PC-9 (cell line): ENCODE measurements at regions of chr4 and their contacts with region 1.

Region 1: GRCh38 chr4:81040012-81040659 is 9.6 kb downstream of the BMP3 start:
- DNase-seq: no peak
- H3K4me3 ChIP-seq: no peak overlapping the region
- H3K27ac ChIP-seq: no peak overlapping the region
- H3K4me1 ChIP-seq: peaks cover 17% of the 10 kb centered on the region
- H3K27me3 ChIP-seq: no peaks in the 10 kb centered on the region
- CTCF ChIP-seq: peak; percentile 73

Region 2: GRCh38 chr4:80576796-80577195 is 463.3 kb before region 1 on chr4:
- CTCF ChIA-PET with region 1: interaction called, 19 read pairs
- POLR2A ChIA-PET with region 1: no interaction called
- intact Hi-C with region 1: no loop called
- DNase-seq: no peak
- H3K4me3 ChIP-seq: no peak overlapping the region
- H3K27ac ChIP-seq: no peak overlapping the region
- H3K4me1 ChIP-seq: no peaks in the 10 kb centered on the region
- H3K27me3 ChIP-seq: no peaks in the 10 kb centered on the region
- CTCF ChIP-seq: no peak

Region 3: DNA sequence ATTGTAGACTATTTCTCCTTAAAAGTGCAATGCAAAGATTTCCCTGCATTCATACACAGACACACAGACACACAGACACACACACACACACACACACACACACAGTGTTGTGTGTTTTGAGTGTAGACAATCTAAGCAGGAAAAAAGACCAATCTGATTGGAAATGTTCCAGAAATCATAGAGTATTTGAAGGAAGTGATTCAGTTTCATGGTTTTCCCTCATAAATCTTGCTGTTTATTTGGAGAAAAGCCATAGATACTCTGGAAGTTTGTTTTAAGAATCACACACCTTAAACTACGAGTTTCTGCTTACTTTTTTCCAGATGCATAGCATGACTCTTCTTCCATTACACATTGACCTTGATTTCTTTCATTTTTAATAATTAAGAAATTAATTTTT is 308.1 kb before region 1 on chr4:
- CTCF ChIA-PET with region 1: no interaction called
- POLR2A ChIA-PET with region 1: interaction called, 14 read pairs
- intact Hi-C with region 1: no loop called
- DNase-seq: peak in 1 of 2 experiments; percentile 63
- H3K4me3 ChIP-seq: no peak overlapping the region
- H3K27ac ChIP-seq: 0 out of 2 replicates have a peak overlapping the region, but pooled peaks have one; percentile 20
- H3K4me1 ChIP-seq: peaks cover 17% of the 10 kb centered on the region; the same call in 1 of the 2 replicates
- H3K27me3 ChIP-seq: no peaks in the 10 kb centered on the region
- CTCF ChIP-seq: no peak

Region 4: DNA sequence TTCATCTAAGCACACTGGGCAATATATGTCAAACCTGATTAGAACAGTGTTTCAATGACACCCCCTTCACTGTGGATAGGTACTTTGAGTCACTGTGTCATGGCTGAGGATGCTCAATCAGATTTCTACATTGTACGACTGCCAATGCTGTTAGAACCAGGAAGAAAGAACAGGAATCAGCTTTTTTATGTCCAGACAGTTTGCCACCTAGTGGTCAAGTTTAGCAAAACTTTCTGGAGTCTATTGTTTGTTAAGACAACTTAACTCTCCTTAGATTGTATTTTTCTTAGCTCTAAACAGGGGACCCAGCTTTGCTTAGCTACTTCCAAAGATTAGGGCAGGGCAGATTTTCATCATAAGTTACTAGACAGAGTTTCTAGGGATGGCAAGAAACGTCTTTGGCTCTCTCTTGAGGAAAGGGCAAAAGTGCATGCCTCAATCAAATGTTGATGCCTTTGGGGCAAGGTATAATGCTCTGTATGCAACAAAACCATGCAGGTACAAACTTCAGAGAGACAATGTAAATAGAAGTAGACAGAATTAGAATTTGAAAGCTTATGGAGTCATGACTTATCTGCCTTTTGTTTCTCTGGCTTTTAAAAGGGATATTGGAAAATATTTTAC is 50.1 kb before region 1 on chr4:
- CTCF ChIA-PET with region 1: interaction called, 3 read pairs
- POLR2A ChIA-PET with region 1: no interaction called
- intact Hi-C with region 1: loop called (anchors 5 kb)
- DNase-seq: peak in 1 of 2 experiments; percentile 7
- H3K4me3 ChIP-seq: no peak overlapping the region
- H3K27ac ChIP-seq: no peak overlapping the region
- H3K4me1 ChIP-seq: no peaks in the 10 kb centered on the region
- H3K27me3 ChIP-seq: no peaks in the 10 kb centered on the region
- CTCF ChIP-seq: peak; percentile 76

Region 5: GRCh38 chr4:81221303-81222081 is 181.4 kb after region 1 on chr4:
- CTCF ChIA-PET with region 1: no interaction called
- POLR2A ChIA-PET with region 1: no interaction called
- intact Hi-C with region 1: no loop called
- DNase-seq: no peak
- H3K4me3 ChIP-seq: no peak overlapping the region
- H3K27ac ChIP-seq: no peak overlapping the region
- H3K4me1 ChIP-seq: no peaks in the 10 kb centered on the region
- H3K27me3 ChIP-seq: no peaks in the 10 kb centered on the region
- CTCF ChIP-seq: no peak